ENCODE measurements at regions of chr21 and their contacts with region 1.

Region 1: DNA sequence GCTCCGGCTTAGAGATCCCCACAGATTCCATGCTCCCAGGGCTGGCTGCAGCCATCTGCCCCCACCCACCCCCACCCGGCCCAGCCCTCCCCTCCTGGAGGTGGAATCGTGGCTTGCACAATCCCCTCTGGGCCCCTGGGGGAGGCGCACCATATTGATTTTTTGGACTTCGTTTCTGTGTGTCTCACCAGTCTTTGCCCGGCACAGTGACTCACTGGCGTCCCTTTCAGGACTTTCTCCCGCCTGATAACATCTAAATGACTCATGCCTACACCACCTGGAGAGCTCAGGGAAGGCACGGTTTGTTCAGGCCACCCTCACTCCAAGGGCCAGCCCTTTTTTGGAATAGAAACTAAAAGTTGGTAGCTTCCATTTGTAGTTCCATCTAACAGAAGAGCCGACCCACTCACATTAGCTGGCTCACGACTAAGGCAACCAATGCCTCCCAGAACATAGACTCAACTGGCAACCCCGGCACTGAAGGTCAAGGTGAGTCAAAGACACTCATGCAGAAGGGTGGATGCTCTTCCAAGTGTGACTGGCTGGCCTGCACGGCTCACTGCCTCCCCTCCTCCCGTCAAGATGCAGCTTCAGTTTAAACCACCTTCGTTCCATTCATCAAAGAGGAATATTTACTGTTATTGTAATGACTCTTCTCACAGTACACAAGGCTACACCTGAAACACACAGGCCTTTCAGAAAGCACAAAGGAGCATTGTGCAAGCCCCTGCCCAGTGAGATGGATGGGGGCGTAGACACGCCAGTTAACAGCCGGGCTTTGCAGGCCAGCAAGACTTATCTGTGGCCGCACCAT is 18.1 kb upstream of the ETS2 start:
- DNase-seq: peak; percentile 97
- ATAC-seq: peak; percentile 94
- H3K4me3 ChIP-seq: peak overlapping the region; percentile 24 to 32
- H3K27ac ChIP-seq: peak overlapping the region; percentile 89
- H3K4me1 ChIP-seq: peaks cover 33 to 41% of the 10 kb centered on the region in 2 experiments
- H3K27me3 ChIP-seq: no peaks in the 10 kb centered on the region
- CTCF ChIP-seq: no peak
- POLR2A ChIP-seq: no peak
- RAD21 ChIP-seq: no peak

Region 2: GRCh38 chr21:38798481-38798882 is 10.8 kb after region 1 on chr21:
- CTCF ChIA-PET with region 1: interaction called, 8 read pairs
- POLR2A ChIA-PET with region 1: interaction called, 27 read pairs
- RAD21 ChIA-PET with region 1: interaction called in 1 of 2 experiments, 7 read pairs
- intact Hi-C with region 1: no loop called
- DNase-seq: peak; percentile 87
- ATAC-seq: peak; percentile 89
- H3K4me3 ChIP-seq: peak overlapping the region in 1 of 2 experiments; percentile 23; a peak in 2 of 4 replicates
- H3K27ac ChIP-seq: peak overlapping the region; percentile 70
- H3K4me1 ChIP-seq: peaks cover 42 to 56% of the 10 kb centered on the region in 2 experiments
- H3K27me3 ChIP-seq: no peaks in the 10 kb centered on the region
- CTCF ChIP-seq: no peak
- POLR2A ChIP-seq: no peak
- RAD21 ChIP-seq: no peak

Region 3: GRCh38 chr21:38913120-38913892 is 125.6 kb after region 1 on chr21:
- CTCF ChIA-PET with region 1: no interaction called
- POLR2A ChIA-PET with region 1: interaction called, 4 read pairs
- RAD21 ChIA-PET with region 1: no interaction called
- intact Hi-C with region 1: loop called (anchors 2 kb)
- DNase-seq: peak; percentile 77
- ATAC-seq: peak; percentile 85
- H3K4me3 ChIP-seq: peak overlapping the region; percentile 30 to 52
- H3K27ac ChIP-seq: peak overlapping the region; percentile 49
- H3K4me1 ChIP-seq: peaks cover 50 to 54% of the 10 kb centered on the region in 2 experiments
- H3K27me3 ChIP-seq: no peaks in the 10 kb centered on the region
- CTCF ChIP-seq: no peak
- POLR2A ChIP-seq: no peak
- RAD21 ChIP-seq: no peak

Region 4: GRCh38 chr21:39079617-39080016 is 291.9 kb after region 1 on chr21:
- CTCF ChIA-PET with region 1: no interaction called
- POLR2A ChIA-PET with region 1: no interaction called
- RAD21 ChIA-PET with region 1: no interaction called
- intact Hi-C with region 1: no loop called
- DNase-seq: no peak
- ATAC-seq: no peak
- H3K4me3 ChIP-seq: no peak overlapping the region
- H3K27ac ChIP-seq: no peak overlapping the region
- H3K4me1 ChIP-seq: peaks cover 4 to 8% of the 10 kb centered on the region in 2 experiments; a peak in 2 of 4 replicates
- H3K27me3 ChIP-seq: no peaks in the 10 kb centered on the region
- CTCF ChIP-seq: no peak
- POLR2A ChIP-seq: no peak
- RAD21 ChIP-seq: no peak

Measured in HCT116 (cell line).